Activated B cell treated with CpG ODN at 0.5 μM for 24 hours (primary cell): ENCODE measurements at regions of chr20 and their contacts with region 1.

Region 1: GRCh38 chr20:2101865-2102584 is 398 bp downstream of the STK35 start:
- DNase-seq: peak; percentile 87
- ATAC-seq: peak; percentile 82
- H3K4me3 Mint-ChIP-seq: peak overlapping the region; percentile 93
- H3K27ac Mint-ChIP-seq: peak overlapping the region; percentile 100
- H3K4me1 Mint-ChIP-seq: peaks cover 41% of the 10 kb centered on the region
- H3K27me3 Mint-ChIP-seq: no peaks in the 10 kb centered on the region
- CTCF ChIP-seq: no peak

Region 2: DNA sequence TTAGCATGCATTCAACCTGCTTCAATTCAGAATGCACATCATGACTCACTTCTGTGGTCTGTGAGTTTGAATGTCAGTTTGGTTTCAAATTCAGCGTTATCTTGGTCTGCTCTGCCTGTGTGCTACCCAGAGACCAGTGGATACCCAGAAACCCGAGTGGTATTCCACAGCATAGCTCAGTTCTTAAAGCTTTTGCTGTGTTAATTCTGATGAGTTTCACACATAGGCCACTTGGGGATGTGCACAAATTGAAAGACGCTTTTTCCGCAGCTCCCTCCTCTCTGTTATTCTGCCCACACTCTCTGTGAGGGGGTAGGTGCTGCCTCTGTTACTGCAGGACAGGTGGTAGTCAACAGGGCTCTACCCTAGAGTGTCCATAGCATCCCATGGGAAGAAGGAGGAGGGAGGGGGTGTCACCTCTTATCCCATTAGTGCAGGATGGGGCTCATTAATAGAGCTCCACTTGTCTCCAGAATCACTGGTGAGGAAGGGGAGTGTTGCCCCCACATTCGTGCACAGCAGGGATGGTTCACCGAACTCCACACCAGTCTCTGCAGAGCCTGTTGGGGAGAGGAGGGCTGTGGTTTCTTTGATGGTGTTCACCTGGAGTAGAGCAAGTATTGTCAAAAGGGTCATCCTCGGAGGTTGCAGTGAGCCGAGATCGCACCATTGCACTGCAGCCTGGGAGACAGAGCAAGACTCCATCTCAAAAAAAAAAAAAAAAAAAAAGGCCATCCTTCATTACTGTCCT is 743.9 kb before region 1 on chr20:
- CTCF ChIA-PET with region 1: no interaction called
- POLR2A ChIA-PET with region 1: interaction called, 14 read pairs
- intact Hi-C with region 1: no loop called
- DNase-seq: no peak
- ATAC-seq: no peak
- H3K4me3 Mint-ChIP-seq: no peak overlapping the region
- H3K27ac Mint-ChIP-seq: no peak overlapping the region
- H3K4me1 Mint-ChIP-seq: peaks cover 7% of the 10 kb centered on the region
- H3K27me3 Mint-ChIP-seq: no peaks in the 10 kb centered on the region
- CTCF ChIP-seq: no peak

Region 3: GRCh38 chr20:1776681-1777475 is 325.1 kb before region 1 on chr20:
- CTCF ChIA-PET with region 1: interaction called, 5 read pairs
- POLR2A ChIA-PET with region 1: interaction called, 7 read pairs
- intact Hi-C with region 1: loop called (anchors 1 kb)
- DNase-seq: peak; percentile 80
- ATAC-seq: peak; percentile 94
- H3K4me3 Mint-ChIP-seq: peak overlapping the region; percentile 83
- H3K27ac Mint-ChIP-seq: peak overlapping the region; percentile 57
- H3K4me1 Mint-ChIP-seq: peaks cover 17% of the 10 kb centered on the region
- H3K27me3 Mint-ChIP-seq: peaks cover 7% of the 10 kb centered on the region
- CTCF ChIP-seq: peak; percentile 22

Region 4: GRCh38 chr20:1809121-1809520 is 292.9 kb before region 1 on chr20:
- CTCF ChIA-PET with region 1: no interaction called
- POLR2A ChIA-PET with region 1: no interaction called
- intact Hi-C with region 1: no loop called
- DNase-seq: no peak
- ATAC-seq: no peak
- H3K4me3 Mint-ChIP-seq: no peak overlapping the region
- H3K27ac Mint-ChIP-seq: peak overlapping the region; percentile 19
- H3K4me1 Mint-ChIP-seq: peaks cover 44% of the 10 kb centered on the region
- H3K27me3 Mint-ChIP-seq: no peaks in the 10 kb centered on the region
- CTCF ChIP-seq: no peak

Region 5: DNA sequence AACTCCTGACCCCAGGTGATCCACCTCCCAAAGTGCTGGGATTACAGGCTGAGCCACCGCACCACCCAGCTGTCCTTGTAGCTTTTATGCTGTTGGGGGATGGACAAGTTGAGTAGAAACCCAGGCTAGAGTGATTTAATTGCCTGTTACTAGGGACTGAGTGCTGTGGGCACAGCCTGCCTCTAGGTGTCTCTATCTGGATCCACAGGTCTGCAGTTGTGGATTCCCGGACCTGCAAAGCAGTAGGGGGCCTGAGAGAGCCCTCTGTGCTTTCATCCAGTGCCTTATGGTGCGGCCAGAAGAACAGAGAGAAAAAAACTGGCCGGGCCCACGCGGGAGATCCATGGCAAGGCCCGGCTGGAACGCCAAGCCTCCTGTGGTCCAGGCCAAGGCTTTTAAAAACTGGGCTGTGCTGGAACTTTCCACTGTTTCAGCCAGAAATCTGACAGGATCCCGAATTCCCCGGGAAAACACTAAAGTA is 201.7 kb before region 1 on chr20:
- CTCF ChIA-PET with region 1: no interaction called
- POLR2A ChIA-PET with region 1: interaction called, 4 read pairs
- intact Hi-C with region 1: loop called (anchors 1 kb)
- DNase-seq: no peak
- ATAC-seq: peak; percentile 11
- H3K4me3 Mint-ChIP-seq: no peak overlapping the region
- H3K27ac Mint-ChIP-seq: no peak overlapping the region
- H3K4me1 Mint-ChIP-seq: peaks cover 49% of the 10 kb centered on the region
- H3K27me3 Mint-ChIP-seq: no peaks in the 10 kb centered on the region
- CTCF ChIP-seq: no peak

Region 6: GRCh38 chr20:2206957-2207769 is 105.1 kb after region 1 on chr20:
- CTCF ChIA-PET with region 1: no interaction called
- POLR2A ChIA-PET with region 1: interaction called, 8 read pairs
- intact Hi-C with region 1: loop called (anchors 2 kb)
- DNase-seq: peak; percentile 76
- ATAC-seq: peak; percentile 76
- H3K4me3 Mint-ChIP-seq: peak overlapping the region; percentile 82
- H3K27ac Mint-ChIP-seq: peak overlapping the region; percentile 38
- H3K4me1 Mint-ChIP-seq: peaks cover 19% of the 10 kb centered on the region
- H3K27me3 Mint-ChIP-seq: no peaks in the 10 kb centered on the region
- CTCF ChIP-seq: no peak

Region 7: DNA sequence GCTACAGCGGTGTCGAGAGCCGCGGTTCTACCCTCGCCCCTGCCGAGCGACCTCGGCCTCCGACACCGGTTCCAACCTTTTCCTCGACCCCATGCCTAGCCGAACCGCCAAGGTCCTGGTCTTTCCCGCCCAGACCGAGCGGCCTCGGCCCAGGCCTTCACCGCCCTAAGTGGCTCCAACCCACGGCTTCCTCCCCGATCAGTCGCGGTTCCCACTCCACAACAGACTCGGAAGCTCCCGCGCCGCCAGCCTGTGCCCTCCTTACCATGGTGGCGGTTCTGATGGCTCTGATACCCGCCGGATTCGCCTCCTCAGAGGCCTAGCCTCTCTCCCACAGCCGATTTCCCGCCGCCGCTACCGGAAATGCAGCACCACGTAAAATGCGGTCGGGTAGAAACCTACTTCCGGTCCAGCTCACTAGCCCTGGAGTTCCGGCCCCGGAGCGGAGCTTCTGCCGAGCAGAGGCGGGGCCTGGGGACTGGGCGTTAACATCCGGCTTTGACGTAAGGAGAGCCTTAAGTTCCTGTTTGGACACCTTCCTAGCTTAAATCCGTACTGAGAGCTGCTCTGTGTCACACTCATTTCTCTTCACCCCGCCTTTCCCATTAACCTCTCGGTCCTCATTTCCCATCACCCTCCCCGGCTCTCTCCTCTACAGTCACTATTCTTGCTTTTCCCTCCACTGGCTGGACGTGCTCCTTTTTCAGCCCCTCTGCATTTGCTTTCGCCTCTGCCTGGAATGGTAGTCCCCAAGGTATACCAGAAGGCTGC is 368.6 kb after region 1 on chr20 and contains the start of gene SNRPB:
- CTCF ChIA-PET with region 1: no interaction called
- POLR2A ChIA-PET with region 1: interaction called, 13 read pairs
- intact Hi-C with region 1: loop called (anchors 1 kb)
- DNase-seq: peak; percentile 95
- ATAC-seq: peak; percentile 94
- H3K4me3 Mint-ChIP-seq: peak within 1 kb of the TSS; percentile 99
- H3K27ac Mint-ChIP-seq: peak within 1 kb of the TSS; percentile 97
- H3K4me1 Mint-ChIP-seq: peaks cover 50% of the 10 kb centered on the region
- H3K27me3 Mint-ChIP-seq: no peaks in the 10 kb centered on the region
- CTCF ChIP-seq: no peak
- total RNA-seq, gene SNRPB: 215 and 234 TPM in 2 replicates